OCI-LY7 (cell line): ENCODE measurements at regions of chr1 and their contacts with region 1.

Region 1: GRCh38 chr1:6489799-6490180 is 1.7 kb downstream of the PLEKHG5 start:
- DNase-seq: peak; percentile 88
- H3K4me3 ChIP-seq: peak overlapping the region; percentile 77
- H3K27ac ChIP-seq: peak overlapping the region; percentile 56
- H3K4me1 ChIP-seq: peaks cover 14% of the 10 kb centered on the region
- CTCF ChIP-seq: peak; percentile 95

Region 2: DNA sequence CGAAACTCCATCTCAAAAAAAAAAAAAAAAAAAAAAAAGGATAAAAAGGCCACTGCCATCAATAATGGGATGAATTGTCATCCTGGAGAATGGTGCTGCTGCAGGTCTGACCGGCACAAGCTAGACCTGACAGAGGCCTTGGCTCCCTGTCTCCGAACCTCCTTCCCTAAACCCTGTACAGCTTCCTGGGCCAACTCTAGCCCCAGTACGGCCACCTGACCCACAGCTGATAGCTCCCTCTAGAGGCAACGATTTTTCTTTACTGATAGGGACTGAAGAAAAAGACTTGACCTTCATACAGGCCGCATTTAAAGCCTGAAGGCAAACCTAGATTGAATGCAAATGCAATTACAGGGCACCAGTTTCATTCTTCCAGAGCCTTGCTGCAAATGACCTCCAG is 33.8 kb after region 1 on chr1:
- CTCF ChIA-PET with region 1: no interaction called
- POLR2A ChIA-PET with region 1: no interaction called
- intact Hi-C with region 1: loop called (anchors 5 kb)
- DNase-seq: peak; percentile 34
- H3K4me3 ChIP-seq: no peak overlapping the region
- H3K27ac ChIP-seq: no peak overlapping the region
- H3K4me1 ChIP-seq: no peaks in the 10 kb centered on the region
- CTCF ChIP-seq: peak; percentile 78

Region 3: GRCh38 chr1:6624710-6625583 is 135.2 kb after region 1 on chr1 and contains the start of gene THAP3:
- CTCF ChIA-PET with region 1: no interaction called
- POLR2A ChIA-PET with region 1: no interaction called
- intact Hi-C with region 1: loop called (anchors 5 kb)
- DNase-seq: peak; percentile 86
- H3K4me3 ChIP-seq: peak within 1 kb of the TSS; percentile 94
- H3K27ac ChIP-seq: peak within 1 kb of the TSS; percentile 29
- H3K4me1 ChIP-seq: peaks cover 24% of the 10 kb centered on the region
- CTCF ChIP-seq: peak; percentile 67
- total RNA-seq, gene THAP3: 22.4 and 24.9 TPM in 2 replicates

Region 4: GRCh38 chr1:6646499-6647148 is 156.8 kb after region 1 on chr1:
- CTCF ChIA-PET with region 1: no interaction called
- POLR2A ChIA-PET with region 1: no interaction called
- intact Hi-C with region 1: loop called (anchors 1 kb)
- DNase-seq: peak; percentile 65
- H3K4me3 ChIP-seq: no peak overlapping the region
- H3K27ac ChIP-seq: no peak overlapping the region
- H3K4me1 ChIP-seq: no peaks in the 10 kb centered on the region
- CTCF ChIP-seq: peak; percentile 84

Region 5: GRCh38 chr1:7218210-7218832 is 728.5 kb after region 1 on chr1:
- CTCF ChIA-PET with region 1: no interaction called
- POLR2A ChIA-PET with region 1: no interaction called
- intact Hi-C with region 1: loop called (anchors 10 kb)
- DNase-seq: peak; percentile 55
- H3K4me3 ChIP-seq: no peak overlapping the region
- H3K27ac ChIP-seq: no peak overlapping the region
- H3K4me1 ChIP-seq: no peaks in the 10 kb centered on the region
- CTCF ChIP-seq: peak; percentile 92